ENCODE measurements at regions of chr7 and their contacts with region 1.

Region 1: GRCh38 chr7:106041140-106041717 is 70.9 kb downstream of the SYPL1 start:
- DNase-seq: no peak
- ATAC-seq: peak; percentile 20

Region 2: GRCh38 chr7:105652359-105652993 is 388.8 kb before region 1 on chr7:
- intact Hi-C with region 1: loop called (anchors 2 kb)
- DNase-seq: peak; percentile 85
- ATAC-seq: peak; percentile 94